Gastrocnemius medialis (tissue), 4 donors: ENCODE measurements at regions of chr7 and their contacts with region 1.

Region 1: GRCh38 chr7:5997222-5997808 is 11.5 kb downstream of the PMS2 start:
- DNase-seq: peak in 1 of 2 donors; percentile 39
- ATAC-seq: peak; percentile 76 to 90
- H3K4me3 ChIP-seq: no peak overlapping the region
- H3K27ac ChIP-seq: peak overlapping the region in 2 of 4 donors; percentile 58 to 81
- H3K4me1 ChIP-seq: peaks cover 0 to 11% of the 10 kb centered on the region in 2 donors
- H3K27me3 ChIP-seq: no peaks in the 10 kb centered on the region
- CTCF ChIP-seq: peak; percentile 38 to 63 (median 58)
- POLR2A ChIP-seq: no peak

Region 2: DNA sequence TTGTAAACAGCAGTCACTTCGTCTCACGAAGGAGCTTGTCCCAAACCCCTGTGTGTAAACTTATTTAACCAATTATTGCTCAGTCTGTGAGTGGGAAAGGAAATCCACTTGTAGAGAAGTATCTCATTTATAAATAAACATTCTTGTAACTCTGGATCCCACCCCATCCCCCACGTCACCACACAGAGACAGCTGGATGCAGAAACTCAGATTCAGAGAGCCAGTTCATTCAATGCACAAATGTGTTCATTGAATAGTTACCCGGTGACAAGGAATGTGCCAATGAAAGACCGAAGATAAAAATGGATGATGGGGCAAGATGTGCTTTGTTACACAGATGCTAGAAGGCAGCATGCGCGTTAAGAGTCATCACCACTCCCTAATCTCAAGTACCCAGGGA is 125.0 kb before region 1 on chr7:
- in situ Hi-C with region 1: loop called in 1 of 4 experiments (anchors 25 kb)
- intact Hi-C with region 1: no loop called
- DNase-seq: no peak
- ATAC-seq: no peak
- H3K4me3 ChIP-seq: no peak overlapping the region
- H3K27ac ChIP-seq: no peak overlapping the region
- H3K4me1 ChIP-seq: no peaks in the 10 kb centered on the region
- H3K27me3 ChIP-seq: peaks cover 0 to 7% (median 0%) of the 10 kb centered on the region in 3 donors
- CTCF ChIP-seq: no peak
- POLR2A ChIP-seq: no peak

Region 3: GRCh38 chr7:6057316-6058129 is 60.2 kb after region 1 on chr7:
- in situ Hi-C with region 1: no loop called
- intact Hi-C with region 1: no loop called
- DNase-seq: no peak
- ATAC-seq: no peak
- H3K4me3 ChIP-seq: peak overlapping the region; percentile 62 to 94 (median 70)
- H3K27ac ChIP-seq: peak overlapping the region in 2 of 4 donors; percentile 76 to 88
- H3K4me1 ChIP-seq: peaks cover 14 to 15% of the 10 kb centered on the region in 2 donors
- H3K27me3 ChIP-seq: no peaks in the 10 kb centered on the region
- CTCF ChIP-seq: no peak
- POLR2A ChIP-seq: no peak

Region 4: DNA sequence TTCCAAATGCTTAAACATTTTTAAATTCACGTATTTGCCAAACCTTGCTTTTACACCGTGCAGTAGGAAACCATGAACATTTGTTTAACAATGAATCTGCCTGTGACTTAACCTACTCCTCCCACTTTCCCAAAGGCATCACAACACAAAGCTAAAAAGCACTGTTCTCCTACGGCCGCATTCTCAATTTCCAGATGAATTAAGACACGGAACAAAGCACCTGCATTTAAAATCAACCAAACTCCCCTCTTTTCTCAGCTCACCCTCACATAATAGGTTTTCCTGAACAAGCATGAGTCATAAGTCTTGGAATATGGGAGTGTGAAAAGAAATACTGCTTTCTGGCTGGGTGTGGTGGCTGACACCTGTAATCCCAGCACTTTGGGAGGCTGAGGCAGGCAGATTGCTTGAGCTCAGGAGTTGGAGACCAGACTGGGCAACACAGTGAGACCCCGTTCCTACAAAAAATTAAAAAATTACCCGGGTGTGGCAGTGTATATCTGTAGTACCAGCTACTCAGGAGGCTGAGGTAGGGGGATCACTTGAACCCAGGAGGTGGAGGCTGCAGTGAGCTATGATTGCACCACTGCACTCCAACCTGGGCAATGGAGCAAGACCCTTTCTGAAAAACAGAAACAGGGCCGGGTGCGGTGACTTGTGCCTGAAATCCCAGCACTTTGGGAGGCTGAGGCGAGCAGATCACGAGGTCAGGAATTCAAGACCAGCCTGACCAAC is 326.8 kb after region 1 on chr7:
- in situ Hi-C with region 1: loop called in 3 of 4 experiments (anchors 10 kb)
- intact Hi-C with region 1: no loop called
- DNase-seq: no peak
- ATAC-seq: no peak
- H3K4me3 ChIP-seq: no peak overlapping the region
- H3K27ac ChIP-seq: no peak overlapping the region
- H3K4me1 ChIP-seq: peaks cover 0 to 5% of the 10 kb centered on the region in 2 donors
- H3K27me3 ChIP-seq: no peaks in the 10 kb centered on the region
- CTCF ChIP-seq: no peak
- POLR2A ChIP-seq: no peak

Region 5: GRCh38 chr7:6435486-6436384 is 438.4 kb after region 1 on chr7:
- in situ Hi-C with region 1: loop called in 1 of 4 experiments (anchors 10 kb)
- intact Hi-C with region 1: no loop called
- DNase-seq: peak; percentile 61 to 72
- ATAC-seq: peak; percentile 51 to 54
- H3K4me3 ChIP-seq: no peak overlapping the region
- H3K27ac ChIP-seq: peak overlapping the region; percentile 83 to 86 (median 84)
- H3K4me1 ChIP-seq: peaks cover 48 to 58% of the 10 kb centered on the region in 2 donors
- H3K27me3 ChIP-seq: no peaks in the 10 kb centered on the region
- CTCF ChIP-seq: peak; percentile 93 to 96 (median 93)
- POLR2A ChIP-seq: no peak